ENCODE measurements at regions of chr1 and their contacts with region 1.

Region 1: DNA sequence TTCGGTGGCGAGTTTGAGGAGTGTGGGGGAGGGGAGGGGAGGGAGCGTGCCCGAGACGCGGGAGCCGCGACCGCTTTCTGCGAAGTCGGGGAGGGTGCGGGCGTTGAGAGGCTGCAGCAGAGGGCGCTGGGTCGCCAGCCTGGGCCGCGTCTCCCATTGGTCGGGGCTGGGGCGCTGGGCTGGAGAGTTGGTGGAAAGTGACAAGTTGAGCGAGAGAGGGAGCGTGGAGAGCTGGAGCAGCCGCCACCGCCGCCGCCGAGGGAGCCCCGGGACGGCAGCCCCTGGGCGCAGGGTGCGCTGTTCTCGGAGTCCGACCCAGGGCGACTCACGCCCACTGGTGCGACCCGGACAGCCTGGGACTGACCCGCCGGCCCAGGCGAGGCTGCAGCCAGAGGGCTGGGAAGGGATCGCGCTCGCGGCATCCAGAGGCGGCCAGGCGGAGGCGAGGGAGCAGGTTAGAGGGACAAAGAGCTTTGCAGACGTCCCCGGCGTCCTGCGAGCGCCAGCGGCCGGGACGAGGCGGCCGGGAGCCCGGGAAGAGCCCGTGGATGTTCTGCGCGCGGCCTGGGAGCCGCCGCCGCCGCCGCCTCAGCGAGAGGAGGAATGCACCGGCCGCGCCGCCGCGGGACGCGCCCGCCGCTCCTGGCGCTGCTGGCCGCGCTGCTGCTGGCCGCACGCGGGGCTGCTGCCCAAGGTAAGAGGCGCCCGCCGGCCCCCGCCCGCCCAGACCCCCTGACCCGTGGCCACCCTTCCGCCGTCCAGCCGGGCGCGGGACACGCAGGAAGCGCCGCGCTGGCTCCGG is at the start of gene ROR1:
- DNase-seq: peak; percentile 66
- ATAC-seq: peak; percentile 94
- H3K4me3 ChIP-seq: peak within 1 kb of the TSS; percentile 68 to 88
- H3K27ac ChIP-seq: peak within 1 kb of the TSS; percentile 91
- H3K4me1 ChIP-seq: peaks cover 50% of the 10 kb centered on the region
- H3K27me3 ChIP-seq: no peaks in the 10 kb centered on the region
- CTCF ChIP-seq: peak; percentile 91
- total RNA-seq, gene ROR1: 19.3 TPM

Region 2: GRCh38 chr1:63691701-63692425 is 82.2 kb before region 1 on chr1:
- CTCF ChIA-PET with region 1: interaction called, 16 read pairs
- POLR2A ChIA-PET with region 1: no interaction called
- in situ Hi-C with region 1: no loop called
- intact Hi-C with region 1: loop called (anchors 5 kb)
- DNase-seq: peak; percentile 92
- ATAC-seq: peak; percentile 95
- H3K4me3 ChIP-seq: no peak overlapping the region
- H3K27ac ChIP-seq: peak overlapping the region; percentile 93
- H3K4me1 ChIP-seq: peaks cover 14% of the 10 kb centered on the region
- H3K27me3 ChIP-seq: no peaks in the 10 kb centered on the region
- CTCF ChIP-seq: peak; percentile 87

Region 3: DNA sequence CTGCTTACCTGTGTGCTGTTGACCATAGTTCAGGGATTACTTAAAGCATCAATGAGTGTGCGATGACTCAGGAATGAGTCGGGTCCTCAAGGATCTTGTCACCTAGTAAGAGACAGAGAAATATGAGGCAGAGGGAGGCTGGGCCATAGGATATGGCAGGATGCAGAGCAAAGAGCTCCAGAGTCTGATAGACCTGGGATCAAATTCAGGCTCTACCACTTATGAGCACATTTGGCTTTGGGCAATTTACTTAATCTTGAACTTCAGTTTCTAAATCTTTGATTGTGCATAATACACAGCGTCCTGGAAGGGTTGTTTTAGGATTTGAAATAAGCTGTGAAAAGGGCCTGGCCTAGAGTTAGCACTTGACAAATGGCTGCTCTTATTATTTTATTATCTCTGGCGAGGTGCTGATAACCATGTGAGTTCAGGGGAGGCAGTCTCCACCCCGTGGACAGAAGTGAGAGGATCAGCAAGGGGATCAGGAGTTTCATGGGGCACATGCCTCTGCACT is 94.3 kb after region 1 on chr1:
- CTCF ChIA-PET with region 1: no interaction called
- POLR2A ChIA-PET with region 1: no interaction called
- in situ Hi-C with region 1: no loop called
- intact Hi-C with region 1: loop called (anchors 10 kb)
- DNase-seq: peak; percentile 85
- ATAC-seq: peak; percentile 81
- H3K4me3 ChIP-seq: no peak overlapping the region
- H3K27ac ChIP-seq: peak overlapping the region; percentile 40
- H3K4me1 ChIP-seq: peaks cover 66% of the 10 kb centered on the region
- H3K27me3 ChIP-seq: no peaks in the 10 kb centered on the region
- CTCF ChIP-seq: peak; percentile 38

Region 4: DNA sequence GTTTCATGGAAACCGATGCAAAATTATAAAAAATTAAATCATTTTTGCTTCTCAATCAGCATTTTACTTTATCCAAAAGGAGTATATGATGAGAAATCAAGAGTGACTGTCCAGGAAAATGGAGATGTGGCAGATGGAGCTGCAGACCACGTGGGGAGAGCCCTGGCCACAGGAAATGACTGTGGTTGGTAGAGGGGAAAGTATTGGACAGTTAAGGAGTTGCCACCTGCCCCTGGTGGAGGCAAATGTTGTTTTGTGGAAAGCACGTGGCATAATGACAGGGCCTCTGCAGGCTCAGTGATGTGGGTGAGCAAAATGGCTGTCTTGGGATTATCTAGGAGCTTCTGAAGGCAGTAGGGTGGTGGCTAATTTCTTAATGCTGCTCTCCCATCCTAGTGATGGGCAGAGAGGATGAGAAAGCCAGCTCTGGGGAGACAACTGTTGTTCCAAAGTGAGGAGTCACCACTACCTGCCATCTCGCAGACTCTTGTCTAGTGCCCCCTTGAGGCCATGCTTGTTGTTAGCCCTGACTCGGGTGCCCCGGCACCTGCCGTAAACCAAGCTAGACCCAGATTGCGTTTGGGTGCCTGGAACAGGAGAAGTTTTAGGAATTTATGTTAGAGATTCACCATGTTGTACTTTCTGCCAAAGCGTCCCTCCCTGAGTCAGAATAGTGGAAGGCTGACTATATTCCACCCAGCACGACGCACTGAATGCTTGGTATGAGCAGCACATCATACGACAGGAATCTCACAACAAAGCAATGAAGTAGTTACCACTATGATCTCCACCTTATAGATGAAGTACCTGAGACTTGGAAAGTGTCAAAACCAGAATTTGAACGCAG is 143.8 kb after region 1 on chr1:
- CTCF ChIA-PET with region 1: no interaction called
- POLR2A ChIA-PET with region 1: no interaction called
- in situ Hi-C with region 1: no loop called
- intact Hi-C with region 1: loop called (anchors 10 kb)
- DNase-seq: no peak
- ATAC-seq: no peak
- H3K4me3 ChIP-seq: no peak overlapping the region
- H3K27ac ChIP-seq: no peak overlapping the region; the same call in 1 of the 2 replicates
- H3K4me1 ChIP-seq: peaks cover 50% of the 10 kb centered on the region
- H3K27me3 ChIP-seq: no peaks in the 10 kb centered on the region
- CTCF ChIP-seq: peak; percentile 50